ENCODE measurements at regions of chr12 and their contacts with region 1.

Region 1: GRCh38 chr12:67667276-67668073 is 18.9 kb downstream of the DYRK2 start:
- DNase-seq: peak; percentile 83
- ATAC-seq: peak; percentile 85 to 86

Region 2: GRCh38 chr12:67364228-67364627 is 303.2 kb before region 1 on chr12:
- intact Hi-C with region 1: no loop called
- DNase-seq: no peak
- ATAC-seq: no peak

Region 3: GRCh38 chr12:67710582-67710981 is 43.1 kb after region 1 on chr12:
- intact Hi-C with region 1: loop called in 1 of 2 experiments (anchors 5 kb)
- DNase-seq: no peak
- ATAC-seq: peak; percentile 38 to 71

Measured in left cardiac atrium (tissue), 4 donors.